Calu3 (cell line): ENCODE measurements at regions of chr3 and their contacts with region 1.

Region 1: GRCh38 chr3:58173664-58174398 is 36.9 kb downstream of the DNASE1L3 start:
- DNase-seq: peak; percentile 71
- H3K4me3 Mint-ChIP-seq: no peak overlapping the region
- H3K27ac Mint-ChIP-seq: peak overlapping the region; percentile 22
- H3K4me1 Mint-ChIP-seq: peaks cover 49% of the 10 kb centered on the region
- H3K27me3 Mint-ChIP-seq: no peaks in the 10 kb centered on the region
- CTCF ChIP-seq: peak; percentile 51

Region 2: GRCh38 chr3:57464801-57465200 is 709.0 kb before region 1 on chr3:
- CTCF ChIA-PET with region 1: no interaction called
- intact Hi-C with region 1: no loop called
- DNase-seq: no peak
- H3K4me3 Mint-ChIP-seq: no peak overlapping the region
- H3K27ac Mint-ChIP-seq: no peak overlapping the region
- H3K4me1 Mint-ChIP-seq: no peaks in the 10 kb centered on the region
- H3K27me3 Mint-ChIP-seq: no peaks in the 10 kb centered on the region
- CTCF ChIP-seq: no peak

Region 3: DNA sequence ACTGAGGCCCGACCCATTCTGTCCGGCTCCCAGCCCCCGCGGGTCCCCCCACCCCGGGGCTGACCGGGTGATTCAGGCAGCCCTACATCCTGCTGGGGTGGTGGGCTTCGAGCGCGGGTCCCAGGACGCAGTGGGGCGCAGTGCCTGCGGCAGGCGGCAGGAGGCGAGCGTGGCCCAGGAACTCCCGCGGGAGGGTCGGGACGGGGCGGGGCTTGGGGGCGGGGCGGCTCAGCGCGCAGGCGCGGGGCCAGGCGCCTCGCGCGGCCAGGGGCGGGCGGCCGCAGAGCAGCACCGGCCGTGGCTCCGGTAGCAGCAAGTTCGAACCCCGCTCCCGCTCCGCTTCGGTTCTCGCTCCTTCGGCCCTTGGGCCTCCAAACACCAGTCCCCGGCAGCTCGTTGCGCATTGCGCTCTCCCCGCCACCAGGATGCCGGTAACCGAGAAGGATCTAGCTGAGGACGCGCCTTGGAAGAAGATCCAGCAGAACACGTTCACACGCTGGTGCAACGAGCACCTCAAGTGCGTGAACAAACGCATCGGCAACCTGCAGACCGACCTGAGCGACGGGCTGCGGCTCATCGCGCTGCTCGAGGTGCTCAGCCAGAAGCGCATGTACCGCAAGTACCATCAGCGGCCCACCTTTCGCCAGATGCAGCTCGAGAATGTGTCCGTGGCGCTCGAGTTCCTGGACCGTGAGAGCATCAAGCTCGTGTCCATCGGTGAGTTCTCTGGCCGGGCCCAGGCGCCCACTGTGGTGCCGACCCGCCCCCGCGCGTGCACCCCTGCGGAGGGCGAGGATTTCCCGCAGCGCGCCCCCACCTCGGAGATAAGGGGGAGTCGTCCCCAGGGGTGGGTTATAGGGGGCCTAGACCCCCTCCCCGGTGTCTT is 165.4 kb before region 1 on chr3 and contains the start of gene FLNB:
- CTCF ChIA-PET with region 1: interaction called, 5 read pairs
- intact Hi-C with region 1: loop called (anchors 2 kb)
- DNase-seq: peak; percentile 80
- H3K4me3 Mint-ChIP-seq: peak within 1 kb of the TSS; percentile 77
- H3K27ac Mint-ChIP-seq: peak within 1 kb of the TSS; percentile 33
- H3K4me1 Mint-ChIP-seq: peaks cover 36% of the 10 kb centered on the region
- H3K27me3 Mint-ChIP-seq: no peaks in the 10 kb centered on the region
- CTCF ChIP-seq: peak; percentile 50
- total RNA-seq, gene FLNB: 136 and 147 TPM in 2 replicates

Region 4: GRCh38 chr3:58414538-58415197 is 240.8 kb after region 1 on chr3:
- CTCF ChIA-PET with region 1: no interaction called
- intact Hi-C with region 1: no loop called
- DNase-seq: peak; percentile 49
- H3K4me3 Mint-ChIP-seq: no peak overlapping the region
- H3K27ac Mint-ChIP-seq: no peak overlapping the region
- H3K4me1 Mint-ChIP-seq: no peaks in the 10 kb centered on the region
- H3K27me3 Mint-ChIP-seq: no peaks in the 10 kb centered on the region
- CTCF ChIP-seq: peak; percentile 37